Activated naive CD4-positive, alpha-beta T cell treated with anti-CD3 and anti-CD28 coated beads for 36 hours (primary cell): ENCODE measurements at regions of chr20 and their contacts with region 1.

Region 1: GRCh38 chr20:38748097-38748860 is at the start of gene ACTR5:
- DNase-seq: peak; percentile 97
- H3K4me3 Mint-ChIP-seq: peak within 1 kb of the TSS; percentile 97
- H3K27ac Mint-ChIP-seq: peak within 1 kb of the TSS; percentile 93
- H3K4me1 Mint-ChIP-seq: peaks cover 15% of the 10 kb centered on the region
- H3K27me3 Mint-ChIP-seq: no peaks in the 10 kb centered on the region
- total RNA-seq, gene ACTR5: 8.3 to 9.4 TPM

Region 2: DNA sequence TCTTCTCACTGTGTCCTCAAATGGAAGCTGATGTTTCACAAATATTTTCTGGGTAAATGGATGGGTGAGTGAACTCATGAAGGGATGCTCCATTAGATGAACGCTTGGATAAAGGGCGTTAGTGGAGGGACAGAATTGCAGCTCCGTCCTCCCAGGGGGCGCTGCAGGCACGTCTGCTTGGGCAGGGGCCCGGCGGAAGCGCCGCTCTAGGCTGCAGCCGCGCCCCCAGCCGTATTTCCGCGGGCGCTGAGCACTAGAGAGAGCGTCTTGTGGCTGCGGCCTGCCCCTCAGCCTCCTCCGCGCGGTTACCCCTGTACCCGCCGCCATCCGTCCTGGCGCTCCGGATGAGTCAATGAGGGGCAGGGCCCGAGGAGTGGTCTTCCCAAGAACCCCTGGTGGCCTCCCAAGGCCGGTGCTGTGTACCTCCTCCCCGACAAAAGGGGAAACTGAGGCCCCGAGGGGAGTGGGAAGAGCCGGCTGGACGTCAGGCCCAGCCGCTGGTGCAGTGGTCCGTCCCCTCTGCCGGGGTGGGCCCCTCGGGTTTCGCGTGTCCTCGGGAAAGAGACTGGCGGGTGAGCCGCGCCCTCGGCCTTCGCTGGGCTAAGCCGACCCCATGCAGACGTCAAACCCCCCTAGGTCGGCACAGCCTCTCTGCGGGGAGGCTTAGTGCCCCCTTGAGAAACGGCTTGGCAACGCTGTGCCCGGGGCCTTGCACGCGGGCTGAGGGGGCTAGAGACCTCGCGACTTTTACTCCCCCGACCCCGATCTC is 301.7 kb before region 1 on chr20:
- CTCF ChIA-PET with region 1: no interaction called
- intact Hi-C with region 1: loop called (anchors 10 kb)
- DNase-seq: peak; percentile 95
- H3K4me3 Mint-ChIP-seq: peak overlapping the region; percentile 80
- H3K27ac Mint-ChIP-seq: peak overlapping the region; percentile 84
- H3K4me1 Mint-ChIP-seq: peaks cover 42% of the 10 kb centered on the region
- H3K27me3 Mint-ChIP-seq: peaks cover 3% of the 10 kb centered on the region

Region 3: DNA sequence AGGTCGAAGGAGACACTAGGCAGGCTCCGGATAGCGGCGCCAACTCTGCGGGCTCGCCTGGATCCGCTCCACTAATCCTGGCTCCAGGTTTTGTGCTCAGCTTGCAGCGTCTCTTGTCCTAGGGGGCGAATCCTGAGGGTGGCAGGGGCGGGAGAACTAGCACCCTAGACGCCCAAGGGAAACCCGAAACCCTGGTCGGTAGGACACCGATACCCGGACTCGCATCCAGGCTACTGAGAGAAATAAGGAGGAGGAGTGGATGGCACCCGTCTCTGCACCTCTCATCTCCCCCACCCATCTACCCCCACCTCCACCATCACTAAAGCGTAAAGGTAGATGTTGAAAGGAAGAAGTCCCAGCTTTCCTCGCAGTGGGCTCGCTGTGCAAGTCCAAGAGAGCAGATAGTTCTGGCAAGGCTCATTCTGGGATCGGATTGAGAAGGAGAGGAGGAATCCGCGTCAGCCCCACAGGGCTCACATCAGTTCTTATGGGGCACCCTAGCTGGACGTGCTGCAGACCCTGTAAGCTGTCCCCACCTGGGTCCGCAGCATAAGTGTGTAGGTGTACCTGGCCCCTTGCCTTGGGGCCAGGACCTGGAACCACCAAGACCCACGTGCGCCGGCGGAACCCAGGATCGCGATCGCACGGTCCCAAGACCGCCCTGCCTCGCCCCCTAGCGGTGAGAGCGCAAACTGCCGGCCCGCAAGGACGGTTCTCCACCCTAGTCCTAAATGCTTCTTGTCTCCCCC is 17.1 kb before region 1 on chr20:
- CTCF ChIA-PET with region 1: interaction called, 22 read pairs
- intact Hi-C with region 1: loop called (anchors 1 kb)
- DNase-seq: peak; percentile 85
- H3K4me3 Mint-ChIP-seq: peak overlapping the region; percentile 61
- H3K27ac Mint-ChIP-seq: no peak overlapping the region
- H3K4me1 Mint-ChIP-seq: peaks cover 39% of the 10 kb centered on the region
- H3K27me3 Mint-ChIP-seq: peaks cover 85% of the 10 kb centered on the region

Region 4: DNA sequence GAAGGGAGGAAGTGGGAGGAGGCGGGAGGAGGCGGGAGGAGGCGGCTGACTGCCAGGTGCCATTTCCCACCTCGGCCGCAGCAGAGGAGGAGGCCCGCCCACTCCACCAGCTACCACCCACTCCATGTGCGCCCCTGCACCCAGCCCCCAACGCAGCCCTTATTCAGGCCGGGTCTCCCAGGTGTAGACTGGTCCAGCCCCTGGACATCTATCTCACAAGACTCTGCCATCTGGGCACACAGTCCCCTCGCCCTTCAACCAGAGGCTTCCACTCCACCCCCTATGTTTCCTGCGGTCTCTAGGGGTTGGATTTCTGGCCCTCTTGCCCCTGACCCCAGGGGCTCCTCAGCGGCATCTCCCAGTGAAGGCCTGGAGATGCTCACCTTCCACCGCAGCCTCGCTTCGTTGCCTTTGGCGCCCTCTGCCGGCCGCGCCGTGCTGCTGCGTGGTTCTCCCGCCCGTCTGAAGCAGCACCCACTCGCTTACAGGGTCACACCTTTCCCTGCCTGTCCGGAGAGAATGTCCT is 145.3 kb after region 1 on chr20:
- CTCF ChIA-PET with region 1: interaction called, 59 read pairs
- intact Hi-C with region 1: loop called (anchors 2 kb)
- DNase-seq: peak; percentile 85
- H3K4me3 Mint-ChIP-seq: no peak overlapping the region
- H3K27ac Mint-ChIP-seq: peak overlapping the region; percentile 42
- H3K4me1 Mint-ChIP-seq: peaks cover 33% of the 10 kb centered on the region
- H3K27me3 Mint-ChIP-seq: no peaks in the 10 kb centered on the region

Region 5: GRCh38 chr20:38962044-38962927 is 214.0 kb after region 1 on chr20 and contains the start of gene DHX35:
- CTCF ChIA-PET with region 1: interaction called, 4 read pairs
- intact Hi-C with region 1: loop called (anchors 1 kb)
- DNase-seq: peak; percentile 99
- H3K4me3 Mint-ChIP-seq: peak within 1 kb of the TSS; percentile 95
- H3K27ac Mint-ChIP-seq: peak within 1 kb of the TSS; percentile 98
- H3K4me1 Mint-ChIP-seq: peaks cover 32% of the 10 kb centered on the region
- H3K27me3 Mint-ChIP-seq: no peaks in the 10 kb centered on the region
- total RNA-seq, gene DHX35: 9.5 to 10.3 TPM